ENCODE measurements at regions of chr1 and their contacts with region 1.

Region 1: GRCh38 chr1:67760030-67760821 is 73.0 kb downstream of the GNG12 start:
- DNase-seq: no peak
- H3K4me3 ChIP-seq: no peak overlapping the region
- H3K27ac ChIP-seq: peak overlapping the region; percentile 49
- H3K27me3 ChIP-seq: no peaks in the 10 kb centered on the region
- CTCF ChIP-seq: peak; percentile 88

Region 2: DNA sequence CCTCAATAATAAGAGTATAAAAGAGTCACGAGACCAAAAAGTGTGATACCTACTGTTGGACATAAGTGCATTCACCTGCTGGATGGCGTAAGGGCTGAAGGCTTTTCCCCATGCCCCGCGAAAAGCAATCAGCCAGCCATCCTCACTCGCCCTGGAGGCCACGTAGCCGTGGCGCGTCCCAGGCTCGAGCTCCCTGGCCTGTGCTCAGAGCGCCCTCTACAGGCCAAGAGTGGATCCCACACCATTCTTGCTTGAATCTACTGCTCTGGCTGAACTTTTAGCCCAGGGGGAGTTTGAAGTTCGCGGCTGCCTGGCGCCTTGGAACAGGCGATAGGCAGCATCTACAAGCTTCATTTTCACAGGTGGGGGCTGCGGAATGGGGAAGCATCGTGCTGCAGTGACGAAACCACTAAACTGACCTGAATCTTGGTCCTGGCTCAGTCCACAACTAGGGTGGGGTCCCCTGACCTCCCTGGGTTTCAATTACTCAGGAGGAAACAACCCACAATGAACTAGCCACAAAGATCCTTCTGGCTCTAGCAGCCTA is 259.7 kb before region 1 on chr1:
- CTCF ChIA-PET with region 1: interaction called, 15 read pairs
- POLR2A ChIA-PET with region 1: no interaction called
- DNase-seq: peak; percentile 59
- H3K4me3 ChIP-seq: no peak overlapping the region
- H3K27ac ChIP-seq: no peak overlapping the region
- H3K27me3 ChIP-seq: peaks cover 3% of the 10 kb centered on the region
- CTCF ChIP-seq: peak; percentile 99

Region 3: DNA sequence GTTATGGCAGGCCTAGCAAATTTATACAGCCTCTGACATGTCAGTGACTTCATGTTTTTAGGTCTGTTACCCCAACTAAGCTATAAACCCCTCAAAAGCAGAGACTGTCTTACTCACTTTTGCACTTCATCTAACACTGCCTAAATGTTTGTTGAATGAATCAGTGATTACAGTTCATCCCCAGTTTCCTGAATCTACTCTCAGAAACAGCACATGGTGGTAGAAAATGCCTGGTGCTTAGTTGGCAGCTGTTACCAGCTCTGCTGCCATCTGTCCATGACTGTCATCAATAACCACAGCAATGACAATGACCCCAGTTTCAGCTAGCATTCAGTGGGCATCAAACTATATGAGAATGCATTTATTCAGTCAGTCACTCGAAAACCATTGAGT is 219.5 kb before region 1 on chr1:
- CTCF ChIA-PET with region 1: interaction called, 456 read pairs
- POLR2A ChIA-PET with region 1: interaction called, 4 read pairs
- DNase-seq: no peak
- H3K4me3 ChIP-seq: no peak overlapping the region
- H3K27ac ChIP-seq: no peak overlapping the region
- H3K27me3 ChIP-seq: no peaks in the 10 kb centered on the region
- CTCF ChIP-seq: no peak

Region 4: GRCh38 chr1:67570473-67571143 is 189.6 kb before region 1 on chr1:
- CTCF ChIA-PET with region 1: interaction called, 35 read pairs
- POLR2A ChIA-PET with region 1: no interaction called
- DNase-seq: peak; percentile 86
- H3K4me3 ChIP-seq: no peak overlapping the region
- H3K27ac ChIP-seq: peak overlapping the region; percentile 89
- H3K27me3 ChIP-seq: no peaks in the 10 kb centered on the region
- CTCF ChIP-seq: no peak

Region 5: DNA sequence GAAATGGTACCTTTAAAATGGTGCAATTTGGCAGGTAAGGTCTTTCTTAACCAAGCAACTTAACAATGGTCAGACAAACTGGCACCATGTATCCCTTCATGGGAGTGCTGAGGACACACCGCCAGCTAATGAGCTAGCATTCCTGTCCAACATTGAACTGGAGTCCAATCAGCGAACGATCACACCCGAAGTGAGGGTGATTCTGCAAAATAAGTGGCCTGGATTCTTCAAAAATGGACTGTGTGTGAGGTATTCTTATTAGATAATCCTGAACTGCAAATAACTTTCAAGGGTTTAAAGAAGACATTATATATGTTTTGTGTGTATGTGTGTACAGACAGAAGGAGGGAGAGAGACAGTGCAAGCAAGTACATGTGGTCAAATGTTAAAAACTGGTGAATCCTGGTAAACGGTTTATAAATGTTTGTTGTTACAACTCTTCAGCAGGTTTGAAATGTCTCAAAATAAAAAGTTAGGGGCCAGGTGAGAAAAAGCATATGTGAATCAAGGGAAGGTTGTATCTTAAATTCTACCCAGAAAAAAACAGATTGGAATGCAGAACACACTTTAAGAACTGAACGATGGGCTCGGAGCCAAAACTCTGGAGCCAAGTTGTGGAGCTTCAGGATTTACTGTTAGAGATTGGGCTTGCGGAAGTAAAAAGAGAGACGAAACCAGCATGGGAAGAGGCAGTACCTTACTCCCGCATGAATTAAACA is 54.3 kb before region 1 on chr1:
- CTCF ChIA-PET with region 1: interaction called, 27 read pairs
- POLR2A ChIA-PET with region 1: no interaction called
- DNase-seq: no peak
- H3K4me3 ChIP-seq: no peak overlapping the region
- H3K27ac ChIP-seq: no peak overlapping the region
- H3K27me3 ChIP-seq: no peaks in the 10 kb centered on the region
- CTCF ChIP-seq: no peak

Region 6: DNA sequence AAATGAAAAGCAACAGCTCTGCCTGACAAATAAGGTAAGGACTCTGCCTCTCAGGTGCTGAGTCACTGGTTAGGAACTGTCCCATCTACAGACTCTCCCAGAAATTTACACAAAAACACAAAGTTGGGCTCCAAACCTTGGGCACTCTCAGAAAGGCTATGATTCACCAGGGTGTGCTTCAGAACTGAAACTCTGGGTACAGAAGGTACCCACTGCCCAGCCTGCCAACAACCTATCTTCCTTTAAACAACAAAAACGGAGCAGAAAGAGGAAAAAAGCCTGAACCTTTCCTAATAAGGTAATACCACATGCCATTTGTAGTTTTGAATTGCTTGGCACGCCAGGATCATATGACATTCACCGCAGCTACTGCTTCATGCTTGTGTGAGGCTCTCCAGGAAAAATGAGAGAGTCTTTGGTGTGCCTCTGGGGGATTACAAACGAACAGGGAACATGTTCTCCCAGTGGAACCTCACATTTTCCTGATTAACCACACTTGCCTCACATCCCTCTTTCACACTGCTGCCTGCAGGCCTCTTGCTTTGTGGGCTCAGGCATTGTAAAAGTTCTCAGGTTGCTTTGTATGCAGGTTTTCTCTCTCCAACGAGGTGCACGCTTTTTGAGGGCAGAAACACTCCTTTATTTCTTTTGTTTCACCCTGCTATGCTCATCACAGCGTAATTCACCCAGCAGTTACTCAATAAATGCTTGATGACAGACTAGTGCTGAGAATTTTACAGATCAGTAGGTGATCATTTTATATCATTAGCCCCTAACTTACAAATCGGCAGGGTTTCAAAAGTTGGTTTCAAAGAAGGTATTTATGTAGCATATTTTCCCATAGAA is 10.2 kb before region 1 on chr1:
- CTCF ChIA-PET with region 1: interaction called, 37 read pairs
- POLR2A ChIA-PET with region 1: no interaction called
- DNase-seq: peak; percentile 61
- H3K4me3 ChIP-seq: peak overlapping the region; percentile 8; the same call in 1 of the 2 replicates
- H3K27ac ChIP-seq: peak overlapping the region; percentile 94
- H3K27me3 ChIP-seq: no peaks in the 10 kb centered on the region
- CTCF ChIP-seq: no peak

Region 7: DNA sequence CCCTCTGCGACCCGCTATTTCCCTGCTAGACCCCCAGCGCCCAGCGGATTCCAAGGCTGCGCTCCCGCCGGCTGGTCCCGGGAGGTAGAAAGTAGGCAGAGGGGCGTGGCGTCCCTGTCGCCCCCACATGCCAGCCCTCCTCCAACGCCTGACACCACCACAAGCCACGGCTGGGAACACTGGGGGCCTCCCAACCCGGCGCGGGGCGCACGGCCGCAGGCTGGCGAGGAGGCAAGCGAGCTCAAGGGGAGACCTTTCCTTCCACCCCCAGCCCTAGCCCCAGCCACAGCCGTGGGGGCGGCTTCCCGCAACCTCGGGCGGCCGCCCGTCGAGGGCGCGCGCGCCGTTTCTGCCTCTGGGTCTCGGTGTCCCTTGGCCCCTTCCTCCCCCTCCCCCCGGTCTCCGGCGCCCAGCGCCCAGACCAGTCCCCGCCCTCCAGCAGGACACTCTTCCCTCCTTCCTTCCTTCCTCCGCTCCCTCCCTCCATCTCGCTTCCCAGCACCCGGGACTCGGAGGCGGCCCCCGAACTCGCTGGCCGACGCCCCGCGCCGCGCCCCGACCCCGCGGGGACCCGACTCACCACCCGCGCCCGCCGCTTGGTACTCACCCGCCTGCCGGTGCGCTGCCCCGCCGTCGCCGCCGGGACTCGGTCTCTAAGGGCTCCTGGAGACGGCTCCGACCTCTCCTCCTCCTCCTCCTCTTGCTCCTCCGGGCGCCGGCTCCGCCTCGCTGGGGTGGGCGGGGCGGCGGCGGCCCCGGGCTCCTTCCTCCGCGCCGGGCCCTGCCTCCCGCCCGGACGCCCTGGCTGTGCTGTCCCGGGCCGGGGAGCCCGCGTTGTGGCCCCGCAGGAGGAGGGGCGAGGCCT is 72.7 kb after region 1 on chr1 and contains the start of gene GNG12:
- CTCF ChIA-PET with region 1: interaction called, 35 read pairs
- POLR2A ChIA-PET with region 1: no interaction called
- DNase-seq: no peak
- H3K4me3 ChIP-seq: peak within 1 kb of the TSS; percentile 83
- H3K27ac ChIP-seq: peak within 1 kb of the TSS; percentile 85
- H3K27me3 ChIP-seq: no peaks in the 10 kb centered on the region
- CTCF ChIP-seq: no peak
- polyA plus RNA-seq, gene GNG12: 140 and 185 TPM in 2 replicates

Region 8: GRCh38 chr1:68087184-68087583 is 327.0 kb after region 1 on chr1:
- CTCF ChIA-PET with region 1: no interaction called
- POLR2A ChIA-PET with region 1: no interaction called
- DNase-seq: no peak
- H3K4me3 ChIP-seq: no peak overlapping the region
- H3K27ac ChIP-seq: no peak overlapping the region
- H3K27me3 ChIP-seq: no peaks in the 10 kb centered on the region
- CTCF ChIP-seq: no peak

Region 9: GRCh38 chr1:68128157-68128556 is 367.9 kb after region 1 on chr1:
- CTCF ChIA-PET with region 1: no interaction called
- POLR2A ChIA-PET with region 1: no interaction called
- DNase-seq: no peak
- H3K4me3 ChIP-seq: no peak overlapping the region
- H3K27ac ChIP-seq: no peak overlapping the region
- H3K27me3 ChIP-seq: no peaks in the 10 kb centered on the region
- CTCF ChIP-seq: no peak

Measured in AG04450 (cell line).